Mammary epithelial cell (primary cell): ENCODE measurements at regions of chr5 and their contacts with region 1.

Region 1: GRCh38 chr5:110496276-110496675 is 230.2 kb downstream of the TMEM232 start:
- DNase-seq: no peak
- H3K4me3 ChIP-seq: no peak overlapping the region
- H3K27ac ChIP-seq: no peak overlapping the region
- H3K4me1 ChIP-seq: no peaks in the 10 kb centered on the region
- H3K27me3 ChIP-seq: peaks cover 3% of the 10 kb centered on the region
- CTCF ChIP-seq: peak in 1 of 2 donors; percentile 4

Region 2: GRCh38 chr5:110525762-110526161 is 29.5 kb after region 1 on chr5:
- CTCF ChIA-PET with region 1: no interaction called
- dilution Hi-C with region 1: no loop called
- in situ Hi-C with region 1: no loop called
- intact Hi-C with region 1: no loop called
- DNase-seq: no peak
- H3K4me3 ChIP-seq: no peak overlapping the region
- H3K27ac ChIP-seq: no peak overlapping the region
- H3K4me1 ChIP-seq: no peaks in the 10 kb centered on the region
- H3K27me3 ChIP-seq: no peaks in the 10 kb centered on the region
- CTCF ChIP-seq: no peak

Region 3: DNA sequence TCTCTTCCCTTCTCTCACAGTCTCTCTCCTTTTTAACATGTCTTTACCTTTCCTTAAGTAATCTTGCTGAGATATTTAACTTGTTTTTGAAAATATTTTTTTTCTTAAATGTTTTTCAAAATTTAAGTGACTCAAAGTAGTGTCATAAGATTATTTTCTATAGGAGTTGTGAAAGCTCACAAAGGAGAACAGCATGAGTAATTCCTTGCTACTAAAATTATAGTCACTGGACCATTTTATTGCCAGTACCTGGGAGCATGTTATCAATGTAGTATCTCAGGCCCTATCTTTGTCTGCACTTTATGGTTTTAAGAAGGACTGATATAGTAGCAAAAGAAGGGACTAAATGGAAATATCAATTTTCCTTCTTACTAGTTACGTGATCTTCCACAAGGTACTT is 48.3 kb after region 1 on chr5:
- CTCF ChIA-PET with region 1: no interaction called
- dilution Hi-C with region 1: loop called (anchors 5 kb)
- in situ Hi-C with region 1: no loop called
- intact Hi-C with region 1: no loop called
- DNase-seq: no peak
- H3K4me3 ChIP-seq: no peak overlapping the region
- H3K27ac ChIP-seq: no peak overlapping the region
- H3K4me1 ChIP-seq: no peaks in the 10 kb centered on the region
- H3K27me3 ChIP-seq: no peaks in the 10 kb centered on the region
- CTCF ChIP-seq: no peak